HAP-1 (cell line): ENCODE measurements at regions of chr11 and their contacts with region 1.

Region 1: DNA sequence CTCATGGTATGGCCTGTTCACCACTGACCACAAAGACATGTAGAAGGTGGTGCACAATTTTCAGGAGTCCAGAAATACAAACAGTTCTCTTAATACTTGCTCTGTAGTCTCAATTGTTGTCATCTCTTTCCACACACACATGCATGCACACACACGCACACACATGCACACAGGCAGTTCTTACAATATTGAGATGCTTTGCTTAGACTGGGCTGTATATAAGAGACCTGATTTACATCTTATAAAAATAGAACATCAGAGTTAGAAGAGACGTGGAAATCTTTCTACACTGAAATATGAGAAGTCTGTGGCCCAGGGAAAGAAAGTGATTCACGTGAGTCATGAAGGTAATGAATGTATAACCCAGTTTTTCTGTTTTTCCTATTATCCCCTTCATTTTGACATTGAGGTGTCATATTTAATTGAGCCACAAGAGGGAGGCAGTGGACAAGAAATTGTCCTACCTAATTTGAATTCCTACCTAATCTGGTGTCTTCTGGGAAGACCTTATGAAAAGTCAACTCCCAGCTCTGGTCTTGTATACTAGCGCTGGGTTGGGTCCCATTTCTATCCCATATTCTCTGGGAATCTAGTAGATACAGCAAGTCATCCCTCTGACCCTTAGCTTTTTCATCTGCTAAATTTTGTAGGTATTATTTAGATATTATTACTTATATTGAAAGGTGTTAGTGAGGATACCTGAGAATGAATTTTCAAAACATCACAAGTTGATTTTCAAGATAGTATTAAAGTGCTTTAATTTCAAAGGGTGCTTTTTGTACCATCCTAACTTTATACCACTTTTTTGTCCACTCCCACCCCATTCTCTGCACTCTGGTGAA is 14.9 kb upstream of the MS4A4A start:
- DNase-seq: peak; percentile 63 to 69
- H3K4me3 ChIP-seq: no peak overlapping the region
- H3K4me1 ChIP-seq: peaks cover 10% of the 10 kb centered on the region
- H3K27me3 ChIP-seq: no peaks in the 10 kb centered on the region

Region 2: GRCh38 chr11:60345489-60345888 is 79.9 kb after region 1 on chr11:
- in situ Hi-C with region 1: loop called (anchors 10 kb)
- DNase-seq: peak; percentile 54 to 76
- H3K4me3 ChIP-seq: no peak overlapping the region
- H3K4me1 ChIP-seq: peaks cover 3% of the 10 kb centered on the region
- H3K27me3 ChIP-seq: no peaks in the 10 kb centered on the region

Region 3: GRCh38 chr11:60485986-60486385 is 220.4 kb after region 1 on chr11:
- in situ Hi-C with region 1: loop called (anchors 10 kb)
- DNase-seq: peak; percentile 75 to 76
- H3K4me3 ChIP-seq: no peak overlapping the region
- H3K4me1 ChIP-seq: no peaks in the 10 kb centered on the region; the same call in 1 of the 2 replicates
- H3K27me3 ChIP-seq: no peaks in the 10 kb centered on the region

Region 4: GRCh38 chr11:60615497-60615896 is 349.9 kb after region 1 on chr11:
- in situ Hi-C with region 1: loop called (anchors 5 kb)
- DNase-seq: no peak
- H3K4me3 ChIP-seq: no peak overlapping the region
- H3K4me1 ChIP-seq: no peaks in the 10 kb centered on the region
- H3K27me3 ChIP-seq: no peaks in the 10 kb centered on the region

Region 5: GRCh38 chr11:61004180-61004611 is 738.6 kb after region 1 on chr11:
- in situ Hi-C with region 1: no loop called
- DNase-seq: no peak
- H3K4me3 ChIP-seq: no peak overlapping the region
- H3K4me1 ChIP-seq: no peaks in the 10 kb centered on the region
- H3K27me3 ChIP-seq: peaks cover 2% of the 10 kb centered on the region; the same call in 1 of the 2 replicates